SK-N-SH (cell line): ENCODE measurements at regions of chr15 and their contacts with region 1.

Region 1: GRCh38 chr15:79380755-79381497 is 51.2 kb upstream of the MINAR1 start:
- DNase-seq: peak; percentile 76
- H3K4me3 ChIP-seq: peak overlapping the region in 1 of 2 experiments; percentile 33; a peak in 1 of 4 replicates
- H3K27ac ChIP-seq: no peak overlapping the region
- H3K4me1 ChIP-seq: peaks cover 0 to 3% of the 10 kb centered on the region in 2 experiments; a peak in 1 of 4 replicates
- H3K27me3 ChIP-seq: no peaks in the 10 kb centered on the region
- CTCF ChIP-seq: peak; percentile 95
- EP300 ChIP-seq: no peak
- RAD21 ChIP-seq: peak; percentile 95

Region 2: GRCh38 chr15:79283252-79284048 is 97.5 kb before region 1 on chr15:
- CTCF ChIA-PET with region 1: no interaction called
- POLR2A ChIA-PET with region 1: no interaction called
- DNase-seq: peak; percentile 69
- H3K4me3 ChIP-seq: peak overlapping the region in 1 of 2 experiments; percentile 28; a peak in 1 of 4 replicates
- H3K27ac ChIP-seq: no peak overlapping the region
- H3K4me1 ChIP-seq: peaks cover 0 to 10% of the 10 kb centered on the region in 2 experiments; a peak in 1 of 4 replicates
- H3K27me3 ChIP-seq: peaks cover 18% of the 10 kb centered on the region; the same call in 1 of the 2 replicates
- CTCF ChIP-seq: no peak
- EP300 ChIP-seq: no peak
- RAD21 ChIP-seq: no peak

Region 3: GRCh38 chr15:79349525-79349924 is 31.4 kb before region 1 on chr15:
- CTCF ChIA-PET with region 1: interaction called, 22 read pairs
- POLR2A ChIA-PET with region 1: no interaction called
- DNase-seq: peak; percentile 33
- H3K4me3 ChIP-seq: no peak overlapping the region
- H3K27ac ChIP-seq: peak overlapping the region in 1 of 2 experiments; percentile 35; a peak in 1 of 4 replicates
- H3K4me1 ChIP-seq: peaks cover 0 to 6% of the 10 kb centered on the region in 2 experiments; a peak in 1 of 4 replicates
- H3K27me3 ChIP-seq: no peaks in the 10 kb centered on the region
- CTCF ChIP-seq: no peak
- EP300 ChIP-seq: no peak
- RAD21 ChIP-seq: no peak

Region 4: GRCh38 chr15:79394231-79394630 is 13.3 kb after region 1 on chr15:
- CTCF ChIA-PET with region 1: interaction called, 46 read pairs
- POLR2A ChIA-PET with region 1: no interaction called
- DNase-seq: no peak
- H3K4me3 ChIP-seq: no peak overlapping the region
- H3K27ac ChIP-seq: no peak overlapping the region
- H3K4me1 ChIP-seq: no peaks in the 10 kb centered on the region; a peak in 1 of 4 replicates
- H3K27me3 ChIP-seq: no peaks in the 10 kb centered on the region
- CTCF ChIP-seq: no peak
- EP300 ChIP-seq: no peak
- RAD21 ChIP-seq: no peak

Region 5: DNA sequence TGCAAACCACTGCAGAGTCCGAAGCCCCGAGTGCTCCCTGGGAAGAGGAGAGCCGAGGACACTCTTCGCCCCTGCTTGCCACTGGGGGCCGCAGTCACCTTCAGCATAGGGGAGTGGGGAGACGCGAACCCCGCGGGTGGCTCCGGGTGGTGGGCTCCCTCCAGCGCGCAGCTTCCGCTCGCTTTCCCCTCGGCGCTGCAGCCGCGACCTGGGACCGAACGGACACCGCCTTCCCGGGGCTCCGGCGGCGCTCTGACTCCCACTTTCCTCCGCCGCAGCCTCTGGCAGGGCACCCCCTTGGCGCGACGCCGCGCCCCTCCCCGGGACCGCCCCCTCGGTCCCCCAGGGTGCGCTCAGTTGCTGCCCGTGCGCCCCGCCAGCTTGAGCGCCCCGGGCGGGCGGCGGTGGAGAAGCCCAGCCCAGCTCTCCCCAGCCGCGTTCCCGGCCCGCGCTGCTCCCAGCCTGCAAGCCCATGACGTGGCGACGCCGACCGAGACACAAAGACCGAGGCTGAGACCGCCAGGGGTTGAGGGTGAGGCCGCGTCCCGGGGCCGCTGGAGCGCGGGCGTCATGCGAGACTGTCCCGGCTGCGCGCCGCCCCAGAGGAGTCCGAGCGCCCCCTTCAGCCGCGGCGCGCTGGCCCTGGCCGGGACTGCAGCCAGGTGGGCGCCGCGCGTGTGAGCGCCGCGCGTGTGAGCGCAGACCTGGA is 50.9 kb after region 1 on chr15 and contains the start of gene MINAR1:
- CTCF ChIA-PET with region 1: interaction called, 40 read pairs
- POLR2A ChIA-PET with region 1: no interaction called
- DNase-seq: peak; percentile 84
- H3K4me3 ChIP-seq: peak within 1 kb of the TSS; percentile 48 to 68
- H3K27ac ChIP-seq: no peak within 1 kb of the TSS
- H3K4me1 ChIP-seq: peaks cover 0 to 7% of the 10 kb centered on the region in 2 experiments; a peak in 1 of 4 replicates
- H3K27me3 ChIP-seq: 0 out of 2 replicates have a peak, but pooled peaks cover 7% of the 10 kb centered on the region
- CTCF ChIP-seq: peak; percentile 42
- EP300 ChIP-seq: no peak
- RAD21 ChIP-seq: peak; percentile 35; the same call in 1 of the 2 replicates
- polyA plus RNA-seq, gene MINAR1: 0.35 and 0.39 TPM in 2 replicates

Region 6: GRCh38 chr15:79834495-79834894 is 453.6 kb after region 1 on chr15:
- CTCF ChIA-PET with region 1: interaction called, 11 read pairs
- POLR2A ChIA-PET with region 1: no interaction called
- DNase-seq: no peak
- H3K4me3 ChIP-seq: no peak overlapping the region
- H3K27ac ChIP-seq: no peak overlapping the region
- H3K4me1 ChIP-seq: no peaks in the 10 kb centered on the region
- H3K27me3 ChIP-seq: no peaks in the 10 kb centered on the region
- CTCF ChIP-seq: no peak
- EP300 ChIP-seq: no peak
- RAD21 ChIP-seq: no peak